Psoas muscle (tissue), 8 donors: ENCODE measurements at regions of chr9 and their contacts with region 1.

Region 1: DNA sequence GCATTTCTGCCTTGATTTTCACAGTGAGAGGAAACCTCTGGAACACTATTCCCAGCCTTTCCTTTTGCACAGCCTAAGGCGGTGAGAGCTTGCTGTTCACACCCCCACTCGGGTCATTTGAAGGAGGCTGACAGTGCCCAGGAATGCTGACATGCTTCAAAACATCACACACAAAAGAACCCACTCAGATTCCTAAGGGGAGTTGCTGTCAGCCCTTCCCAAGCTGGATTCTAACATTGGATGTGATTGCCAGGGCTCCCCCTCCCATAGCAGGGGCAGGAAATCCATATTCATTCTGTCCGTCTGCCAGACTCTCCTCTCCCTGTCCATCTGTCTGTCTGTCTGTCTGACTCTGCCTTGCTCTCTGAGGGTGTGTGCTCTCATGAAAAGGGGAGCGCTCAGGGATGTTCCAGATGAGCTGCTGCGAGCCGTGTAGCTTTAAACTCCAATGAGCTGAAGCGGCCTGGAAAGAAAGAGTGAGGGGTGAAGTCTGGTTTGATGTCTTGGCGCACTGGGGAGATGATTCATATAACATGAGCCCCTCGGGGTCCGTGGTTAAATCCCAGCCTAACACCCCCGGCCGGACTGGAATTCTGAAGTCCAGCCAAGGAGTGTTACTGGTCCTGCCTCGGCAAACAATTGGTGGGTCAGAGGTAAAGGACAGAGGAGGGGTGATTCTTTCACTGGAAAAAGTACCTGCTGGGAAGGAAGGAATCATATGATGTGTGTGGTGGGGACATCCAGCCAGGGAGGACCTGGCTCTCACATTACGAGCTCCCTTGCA is 517.0 kb downstream of the CCDC171 start:
- DNase-seq: no peak
- ATAC-seq: no peak
- H3K4me3 ChIP-seq: no peak overlapping the region
- H3K27ac ChIP-seq: no peak overlapping the region
- H3K4me1 ChIP-seq: no peaks in the 10 kb centered on the region
- H3K27me3 ChIP-seq: no peaks in the 10 kb centered on the region
- CTCF ChIP-seq: no peak

Region 2: GRCh38 chr9:15572200-15572770 is 497.6 kb before region 1 on chr9:
- intact Hi-C with region 1: no loop called
- DNase-seq: no peak
- ATAC-seq: no peak
- H3K4me3 ChIP-seq: no peak overlapping the region
- H3K27ac ChIP-seq: no peak overlapping the region
- H3K4me1 ChIP-seq: no peaks in the 10 kb centered on the region
- H3K27me3 ChIP-seq: no peaks in the 10 kb centered on the region
- CTCF ChIP-seq: no peak

Region 3: DNA sequence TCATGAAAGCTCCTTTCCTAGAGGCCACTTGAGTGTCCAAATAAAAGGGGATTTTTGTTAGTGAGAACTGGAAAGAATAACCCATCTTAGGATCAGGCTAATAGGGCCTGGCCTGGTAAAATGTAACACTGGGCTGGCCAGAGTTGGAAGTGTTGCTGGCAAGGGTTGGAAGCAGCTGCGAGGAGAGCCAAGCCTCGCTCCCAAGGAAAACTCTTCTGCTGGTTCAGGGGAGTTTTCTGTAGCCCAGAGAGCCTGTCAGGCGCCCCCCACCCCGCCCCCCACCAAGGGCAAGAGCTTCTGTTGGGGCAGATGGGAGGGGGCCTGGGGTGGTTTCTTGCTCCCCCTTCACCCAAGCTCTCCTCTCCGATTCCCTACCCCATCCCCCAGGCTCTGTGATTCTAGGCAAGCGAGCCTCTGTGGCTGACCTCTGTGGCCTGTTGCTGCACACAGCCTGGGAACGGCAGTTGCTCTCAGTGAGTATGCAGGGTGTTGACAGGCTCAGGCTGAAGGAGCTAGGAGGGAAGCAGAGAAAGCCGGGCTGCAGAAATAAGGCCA is 30.8 kb after region 1 on chr9:
- intact Hi-C with region 1: loop called in 1 of 2 experiments (anchors 2 kb)
- DNase-seq: peak; percentile 52 to 79
- ATAC-seq: peak; percentile 52 to 77 (median 72)
- H3K4me3 ChIP-seq: no peak overlapping the region
- H3K27ac ChIP-seq: peak overlapping the region; percentile 16
- H3K4me1 ChIP-seq: no peaks in the 10 kb centered on the region
- H3K27me3 ChIP-seq: no peaks in the 10 kb centered on the region
- CTCF ChIP-seq: no peak

Region 4: GRCh38 chr9:16121601-16122286 is 51.9 kb after region 1 on chr9:
- intact Hi-C with region 1: loop called in 1 of 2 experiments (anchors 5 kb)
- DNase-seq: no peak
- ATAC-seq: no peak
- H3K4me3 ChIP-seq: no peak overlapping the region
- H3K27ac ChIP-seq: no peak overlapping the region
- H3K4me1 ChIP-seq: no peaks in the 10 kb centered on the region
- H3K27me3 ChIP-seq: no peaks in the 10 kb centered on the region
- CTCF ChIP-seq: no peak